Activated B cell treated with CpG ODN at 0.5 μM for 24 hours (primary cell): ENCODE measurements at regions of chr16 and their contacts with region 1.

Region 1: GRCh38 chr16:88941913-88942909 is 34.8 kb downstream of the CBFA2T3 start:
- DNase-seq: peak; percentile 77
- ATAC-seq: peak; percentile 67
- H3K4me3 Mint-ChIP-seq: peak overlapping the region; percentile 79
- H3K27ac Mint-ChIP-seq: peak overlapping the region; percentile 66
- H3K4me1 Mint-ChIP-seq: peaks cover 46% of the 10 kb centered on the region
- H3K27me3 Mint-ChIP-seq: no peaks in the 10 kb centered on the region
- CTCF ChIP-seq: peak; percentile 54

Region 2: GRCh38 chr16:88811769-88812512 is 130.3 kb before region 1 on chr16 and contains the start of gene APRT:
- CTCF ChIA-PET with region 1: no interaction called
- POLR2A ChIA-PET with region 1: no interaction called
- intact Hi-C with region 1: loop called (anchors 2 kb)
- DNase-seq: peak; percentile 99
- ATAC-seq: peak; percentile 86
- H3K4me3 Mint-ChIP-seq: peak within 1 kb of the TSS; percentile 91
- H3K27ac Mint-ChIP-seq: peak within 1 kb of the TSS; percentile 97
- H3K4me1 Mint-ChIP-seq: peaks cover 17% of the 10 kb centered on the region
- H3K27me3 Mint-ChIP-seq: no peaks in the 10 kb centered on the region
- CTCF ChIP-seq: no peak
- total RNA-seq, gene APRT: 198 and 209 TPM in 2 replicates

Region 3: GRCh38 chr16:88886845-88887521 is 55.2 kb before region 1 on chr16:
- CTCF ChIA-PET with region 1: no interaction called
- POLR2A ChIA-PET with region 1: no interaction called
- intact Hi-C with region 1: no loop called
- DNase-seq: no peak
- ATAC-seq: no peak
- H3K4me3 Mint-ChIP-seq: no peak overlapping the region
- H3K27ac Mint-ChIP-seq: no peak overlapping the region
- H3K4me1 Mint-ChIP-seq: peaks cover 10% of the 10 kb centered on the region
- H3K27me3 Mint-ChIP-seq: no peaks in the 10 kb centered on the region
- CTCF ChIP-seq: no peak

Region 4: DNA sequence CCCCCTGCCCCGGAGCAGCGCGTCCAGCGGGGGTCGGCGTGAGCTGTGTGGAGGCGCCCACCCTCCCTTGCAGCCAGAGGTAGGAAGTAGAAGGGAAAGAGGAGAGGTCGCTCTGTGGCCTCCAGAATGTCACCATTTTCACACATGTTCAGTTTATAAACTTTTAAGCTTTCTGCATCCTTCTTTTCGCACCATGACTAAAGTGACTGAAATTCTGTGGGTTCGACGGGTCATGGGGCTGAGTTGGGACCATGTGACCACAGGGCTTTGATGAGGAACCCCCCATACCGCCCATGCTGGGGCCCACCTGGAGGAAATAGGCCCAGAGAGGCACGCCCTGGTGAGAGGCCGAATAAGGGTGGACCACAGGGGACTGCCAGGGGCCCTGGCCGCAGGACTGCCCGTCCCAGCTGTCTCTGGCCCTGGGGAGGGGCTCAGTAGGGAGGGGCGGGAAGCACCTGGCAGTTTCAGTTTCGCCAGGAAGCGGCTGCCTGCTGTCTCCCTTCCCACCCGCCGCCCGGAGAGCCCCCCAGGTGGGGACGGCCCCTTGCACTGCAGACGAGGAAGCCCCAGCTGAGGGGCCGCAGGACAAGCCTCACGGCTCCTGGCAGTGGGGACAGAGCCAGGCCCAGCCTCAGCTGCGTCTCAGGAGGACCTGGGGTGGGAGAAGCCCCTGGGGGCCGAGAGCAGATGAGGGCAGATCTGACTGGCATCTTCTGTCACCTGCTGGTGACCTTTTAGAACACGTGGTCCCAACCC is 25.8 kb after region 1 on chr16:
- CTCF ChIA-PET with region 1: interaction called, 4 read pairs
- POLR2A ChIA-PET with region 1: interaction called, 8 read pairs
- intact Hi-C with region 1: loop called (anchors 1 kb)
- DNase-seq: peak; percentile 85
- ATAC-seq: peak; percentile 80
- H3K4me3 Mint-ChIP-seq: peak overlapping the region; percentile 75
- H3K27ac Mint-ChIP-seq: peak overlapping the region; percentile 86
- H3K4me1 Mint-ChIP-seq: peaks cover 86% of the 10 kb centered on the region
- H3K27me3 Mint-ChIP-seq: no peaks in the 10 kb centered on the region
- CTCF ChIP-seq: no peak

Region 5: DNA sequence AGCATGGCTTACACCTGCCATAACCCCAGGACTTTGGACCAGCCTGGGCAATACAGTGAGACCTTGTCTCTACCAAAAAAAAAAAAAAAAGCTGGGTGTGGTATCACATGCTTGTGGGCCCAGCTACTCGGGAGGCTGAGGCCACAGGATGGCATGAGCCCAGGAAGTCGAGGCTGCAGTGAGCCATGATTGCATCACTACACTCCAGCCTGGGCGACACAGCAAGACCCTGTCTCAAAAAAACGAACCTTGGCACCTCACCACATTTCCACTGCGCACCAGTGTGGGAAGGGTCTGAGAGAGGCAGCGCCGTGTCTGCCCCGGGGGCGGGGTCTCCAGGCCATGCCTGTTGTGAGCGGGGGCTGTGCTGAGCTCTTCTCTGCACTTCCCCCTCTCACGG is 157.7 kb after region 1 on chr16:
- CTCF ChIA-PET with region 1: interaction called, 4 read pairs
- POLR2A ChIA-PET with region 1: no interaction called
- intact Hi-C with region 1: loop called (anchors 5 kb)
- DNase-seq: no peak
- ATAC-seq: no peak
- H3K4me3 Mint-ChIP-seq: no peak overlapping the region
- H3K27ac Mint-ChIP-seq: no peak overlapping the region
- H3K4me1 Mint-ChIP-seq: peaks cover 54% of the 10 kb centered on the region
- H3K27me3 Mint-ChIP-seq: no peaks in the 10 kb centered on the region
- CTCF ChIP-seq: no peak

Region 6: DNA sequence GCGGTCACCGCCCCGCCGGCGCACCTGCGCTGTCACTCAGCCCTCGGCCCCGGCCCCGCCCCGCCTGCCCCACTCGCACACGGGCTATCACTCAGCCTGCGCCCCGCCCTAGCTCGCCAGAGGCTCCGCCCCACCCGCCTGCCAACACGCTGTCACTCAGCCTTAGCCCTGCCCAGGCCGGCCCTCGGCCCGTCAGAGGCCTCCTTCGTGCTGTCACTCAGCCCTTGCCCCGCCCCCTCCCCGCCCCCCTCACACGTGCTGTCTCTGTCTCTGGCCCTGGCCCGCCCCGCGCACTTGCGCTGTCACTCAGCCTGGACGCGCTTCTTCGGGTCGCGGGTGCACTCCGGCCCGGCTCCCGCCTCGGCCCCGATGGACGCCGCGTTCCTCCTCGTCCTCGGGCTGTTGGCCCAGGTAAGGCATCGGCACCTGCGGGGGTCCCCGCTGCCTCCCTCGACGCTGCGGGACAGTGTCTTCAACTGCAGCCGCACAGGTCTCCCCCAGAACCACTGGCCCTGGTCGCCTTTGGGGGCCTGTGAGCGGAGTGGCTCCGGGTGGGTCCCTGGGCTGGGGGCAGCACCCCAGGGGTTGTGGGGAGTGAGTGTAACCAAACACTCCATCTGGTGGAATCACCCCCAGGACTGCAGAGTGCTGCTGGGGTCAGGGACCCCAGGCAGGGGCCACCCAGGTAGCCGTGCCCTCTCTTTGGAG is 229.4 kb after region 1 on chr16 and contains the start of gene CDH15:
- CTCF ChIA-PET with region 1: interaction called, 7 read pairs
- POLR2A ChIA-PET with region 1: interaction called, 5 read pairs
- intact Hi-C with region 1: loop called (anchors 1 kb)
- DNase-seq: peak; percentile 84
- ATAC-seq: peak; percentile 96
- H3K4me3 Mint-ChIP-seq: peak within 1 kb of the TSS; percentile 66
- H3K27ac Mint-ChIP-seq: no peak within 1 kb of the TSS
- H3K4me1 Mint-ChIP-seq: peaks cover 12% of the 10 kb centered on the region
- H3K27me3 Mint-ChIP-seq: peaks cover 2% of the 10 kb centered on the region
- CTCF ChIP-seq: no peak
- total RNA-seq, gene CDH15: not detected in 2 replicates